Activated CD4-positive, alpha-beta T cell treated with anti-CD3 and anti-CD28 coated beads, Interleukin-2, amount 10 ng/mL, durations not matched to agents 24 days and 14 days (primary cell): ENCODE measurements at regions of chr12 and their contacts with region 1.

Region 1: DNA sequence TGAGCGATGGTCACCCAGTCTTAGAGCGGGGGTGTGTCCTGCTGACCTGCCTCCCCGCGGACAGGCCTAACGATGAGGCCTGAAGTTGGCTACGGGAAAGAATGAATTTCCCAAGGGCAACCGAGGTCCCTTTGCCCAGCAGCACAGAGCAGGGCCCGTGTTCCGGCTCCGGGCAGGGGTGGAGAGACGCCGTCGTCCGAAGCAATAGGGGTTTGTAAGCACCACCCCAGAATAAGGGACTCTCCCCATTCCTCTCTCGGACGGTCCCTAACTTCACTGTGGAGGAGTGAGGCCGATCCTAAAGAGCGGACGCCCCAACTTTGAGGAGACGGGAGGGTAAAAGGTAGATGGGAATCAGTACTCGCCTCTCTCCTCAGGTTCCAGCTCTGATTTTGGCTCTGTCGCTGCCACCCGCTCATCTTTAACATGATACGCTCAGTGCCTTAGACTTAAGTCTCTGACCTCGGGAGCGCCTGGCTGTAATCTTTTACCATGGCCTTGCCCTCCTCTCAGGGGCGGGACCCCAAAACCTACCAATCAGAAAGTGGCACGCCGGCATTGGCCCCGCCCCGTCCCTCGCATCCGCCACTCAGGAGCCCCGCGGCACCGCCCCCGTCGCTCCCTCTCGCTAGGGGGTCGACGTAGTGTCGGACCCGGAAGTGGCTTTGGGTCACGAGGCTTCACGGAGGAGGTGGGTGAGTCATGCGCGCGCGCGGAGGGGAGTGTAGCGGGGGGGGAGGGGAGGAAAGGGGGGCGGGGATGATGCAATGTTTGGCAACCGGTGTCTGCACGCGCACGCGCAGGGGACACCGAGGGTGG is at the start of gene DDIT3:
- DNase-seq: peak; percentile 100
- H3K4me3 Mint-ChIP-seq: peak within 1 kb of the TSS; percentile 97
- H3K27ac Mint-ChIP-seq: peak within 1 kb of the TSS; percentile 100
- H3K4me1 Mint-ChIP-seq: peaks cover 56% of the 10 kb centered on the region
- H3K27me3 Mint-ChIP-seq: no peaks in the 10 kb centered on the region
- total RNA-seq, gene DDIT3: 15.3 and 16.7 TPM in 2 replicates

Region 2: GRCh38 chr12:57462251-57462911 is 57.9 kb before region 1 on chr12:
- intact Hi-C with region 1: loop called (anchors 1 kb)
- DNase-seq: peak; percentile 97
- H3K4me3 Mint-ChIP-seq: peak overlapping the region; percentile 89
- H3K27ac Mint-ChIP-seq: peak overlapping the region; percentile 79
- H3K4me1 Mint-ChIP-seq: peaks cover 49% of the 10 kb centered on the region
- H3K27me3 Mint-ChIP-seq: peaks cover 20% of the 10 kb centered on the region

Region 3: GRCh38 chr12:57487597-57488401 is 32.5 kb before region 1 on chr12 and contains the start of gene MARS1:
- intact Hi-C with region 1: loop called (anchors 1 kb)
- DNase-seq: peak; percentile 98
- H3K4me3 Mint-ChIP-seq: peak within 1 kb of the TSS; percentile 96
- H3K27ac Mint-ChIP-seq: peak within 1 kb of the TSS; percentile 93
- H3K4me1 Mint-ChIP-seq: peaks cover 27% of the 10 kb centered on the region
- H3K27me3 Mint-ChIP-seq: peaks cover 2% of the 10 kb centered on the region
- total RNA-seq, gene MARS1: 307 and 316 TPM in 2 replicates

Region 4: DNA sequence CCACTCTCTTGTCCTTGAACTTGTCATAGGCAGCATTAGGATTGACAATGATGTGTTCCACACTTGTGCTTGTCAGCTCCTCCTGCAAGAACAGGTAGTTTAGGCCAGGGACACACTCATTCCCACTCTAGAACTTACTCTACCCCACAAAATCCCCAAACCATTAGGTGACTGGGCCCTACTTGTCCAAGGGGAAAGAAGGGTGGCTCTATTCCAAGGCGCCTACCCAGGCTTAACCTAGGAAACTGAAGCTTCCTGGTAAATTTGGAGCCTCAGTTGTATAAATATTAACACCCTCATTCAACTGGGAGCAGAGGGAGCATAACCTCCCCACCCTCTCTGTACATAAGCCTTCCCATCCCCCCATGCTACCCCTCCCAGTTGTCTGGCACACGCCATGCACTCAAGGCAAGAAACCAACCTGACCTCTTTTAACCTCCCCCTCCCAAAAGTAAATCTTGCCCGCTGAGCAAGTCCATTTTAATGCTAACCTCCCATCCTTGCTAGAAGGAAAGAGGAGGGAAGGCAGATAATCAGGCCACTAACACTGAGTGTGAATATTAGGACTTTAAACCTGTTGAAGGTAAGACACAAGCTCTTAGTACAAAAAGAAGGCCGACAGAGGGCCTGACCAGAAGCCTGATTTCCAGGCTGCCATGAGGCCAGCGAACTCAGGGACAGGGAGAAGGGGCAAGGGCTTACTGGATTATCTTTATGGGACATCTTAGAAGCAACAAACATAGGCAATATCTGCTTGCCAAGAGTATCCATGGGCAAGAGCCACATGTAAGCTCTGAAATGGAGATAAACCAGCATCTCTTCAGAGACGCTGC is 15.7 kb after region 1 on chr12:
- intact Hi-C with region 1: no loop called
- DNase-seq: no peak
- H3K4me3 Mint-ChIP-seq: no peak overlapping the region
- H3K27ac Mint-ChIP-seq: no peak overlapping the region
- H3K4me1 Mint-ChIP-seq: peaks cover 2% of the 10 kb centered on the region
- H3K27me3 Mint-ChIP-seq: no peaks in the 10 kb centered on the region

Region 5: DNA sequence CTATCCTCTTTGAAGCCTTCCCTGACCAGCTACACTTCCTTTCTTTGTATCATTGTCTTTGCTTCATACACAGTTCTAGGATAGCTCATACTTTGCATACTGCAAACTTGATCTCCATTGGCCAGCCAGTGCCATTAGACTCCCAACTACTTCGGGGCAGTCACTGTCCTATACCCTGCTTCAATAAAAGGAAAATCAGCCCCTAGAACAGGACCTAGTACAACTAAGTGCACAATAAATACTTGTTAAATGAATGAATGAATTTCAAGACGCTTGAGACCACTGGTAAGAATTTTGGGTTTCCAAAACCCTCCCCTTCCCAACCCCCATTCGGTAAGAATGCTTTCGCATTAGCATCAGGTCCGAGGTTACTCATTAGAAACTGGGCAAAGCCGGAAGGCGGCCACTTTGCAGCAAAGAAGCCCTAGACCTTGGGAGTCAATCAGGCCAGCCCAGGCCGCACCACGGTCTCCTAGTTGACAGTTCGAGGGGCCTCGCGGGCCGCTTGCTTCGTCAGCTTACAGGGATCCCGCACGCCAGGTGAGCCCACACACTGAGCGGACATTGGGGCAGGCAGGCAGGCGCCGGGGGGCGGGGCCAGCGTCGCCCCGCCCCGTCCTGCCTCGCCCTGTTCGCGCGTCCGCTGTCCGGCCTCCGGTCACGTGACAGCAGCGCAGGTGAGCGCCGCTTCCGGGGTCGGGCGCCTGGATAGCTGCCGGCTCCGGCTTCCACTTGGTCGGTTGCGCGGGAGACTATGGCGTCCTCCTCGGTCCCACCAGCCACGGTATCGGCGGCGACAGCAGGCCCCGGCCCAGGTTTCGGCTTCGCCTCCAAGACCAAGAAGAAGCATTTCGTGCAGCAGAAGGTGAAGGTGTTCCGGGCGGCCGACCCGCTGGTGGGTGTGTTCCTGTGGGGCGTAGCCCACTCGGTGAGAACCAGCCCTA is 70.5 kb after region 1 on chr12 and contains the start of gene PIP4K2C:
- intact Hi-C with region 1: loop called (anchors 2 kb)
- DNase-seq: peak; percentile 94
- H3K4me3 Mint-ChIP-seq: peak within 1 kb of the TSS; percentile 89
- H3K27ac Mint-ChIP-seq: peak within 1 kb of the TSS; percentile 76
- H3K4me1 Mint-ChIP-seq: peaks cover 25% of the 10 kb centered on the region
- H3K27me3 Mint-ChIP-seq: peaks cover 3% of the 10 kb centered on the region
- total RNA-seq, gene PIP4K2C: 21.5 and 23.0 TPM in 2 replicates

Region 6: DNA sequence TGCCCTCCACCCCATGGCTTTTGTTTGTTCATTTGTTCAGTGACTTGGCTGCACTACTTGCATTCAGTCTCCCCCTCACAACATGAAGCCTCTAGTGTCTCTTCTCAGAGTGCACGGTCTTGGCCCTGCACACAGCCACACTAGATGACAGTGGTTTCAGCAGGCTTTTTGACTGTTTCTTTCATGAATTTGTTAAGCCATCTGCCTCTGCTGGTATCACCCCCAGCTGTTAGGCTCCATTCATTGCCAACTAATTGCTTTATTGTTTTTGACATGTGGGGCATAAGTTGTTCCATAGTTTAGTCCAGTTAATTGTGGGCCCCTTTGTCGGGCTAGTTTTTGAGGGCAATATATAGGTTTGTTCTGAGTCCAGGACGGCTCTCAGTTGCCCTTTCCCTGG is 192.4 kb after region 1 on chr12:
- intact Hi-C with region 1: no loop called
- DNase-seq: no peak
- H3K4me3 Mint-ChIP-seq: no peak overlapping the region
- H3K27ac Mint-ChIP-seq: no peak overlapping the region
- H3K4me1 Mint-ChIP-seq: peaks cover 3% of the 10 kb centered on the region
- H3K27me3 Mint-ChIP-seq: no peaks in the 10 kb centered on the region

Region 7: GRCh38 chr12:57751788-57752667 is 231.8 kb after region 1 on chr12 and contains the start of gene CDK4:
- intact Hi-C with region 1: loop called (anchors 1 kb)
- DNase-seq: peak; percentile 99
- H3K4me3 Mint-ChIP-seq: peak within 1 kb of the TSS; percentile 96
- H3K27ac Mint-ChIP-seq: peak within 1 kb of the TSS; percentile 97
- H3K4me1 Mint-ChIP-seq: peaks cover 56% of the 10 kb centered on the region
- H3K27me3 Mint-ChIP-seq: no peaks in the 10 kb centered on the region
- total RNA-seq, gene CDK4: 240 and 248 TPM in 2 replicates

Region 8: GRCh38 chr12:58074259-58074658 is 554.0 kb after region 1 on chr12:
- intact Hi-C with region 1: no loop called
- DNase-seq: no peak
- H3K4me3 Mint-ChIP-seq: no peak overlapping the region
- H3K27ac Mint-ChIP-seq: no peak overlapping the region
- H3K4me1 Mint-ChIP-seq: no peaks in the 10 kb centered on the region
- H3K27me3 Mint-ChIP-seq: peaks cover 2% of the 10 kb centered on the region